ENCODE measurements at regions of chr13 and their contacts with region 1.

Region 1: DNA sequence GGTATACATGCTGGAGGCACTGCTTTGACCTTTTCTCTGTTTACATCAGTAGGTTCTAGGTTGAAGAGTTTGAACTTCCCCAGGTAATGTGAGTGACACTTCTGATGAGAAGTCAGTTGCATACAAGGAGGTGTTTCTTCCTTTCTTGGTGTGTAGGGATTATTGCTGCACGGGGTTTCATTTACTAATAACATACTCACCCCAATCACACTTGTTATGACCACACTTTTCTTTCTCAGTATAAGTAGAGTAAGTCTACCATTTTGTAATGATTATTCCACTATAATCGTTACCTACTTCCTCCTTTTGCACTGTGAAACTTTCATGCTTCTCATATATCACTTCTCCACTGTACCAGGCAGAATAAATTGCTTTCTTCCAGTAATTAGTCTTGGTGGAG is 138.0 kb downstream of the TNFSF13B start:
- DNase-seq: no peak
- ATAC-seq: no peak
- H3K4me3 ChIP-seq: no peak overlapping the region
- H3K4me3 Mint-ChIP-seq: peak overlapping the region in 2 of 10 donors; percentile 84 to 87
- H3K27ac ChIP-seq: peak overlapping the region; percentile 1
- H3K27ac Mint-ChIP-seq: peak overlapping the region in 8 of 9 donors; percentile 64 to 95 (median 82)
- H3K4me1 ChIP-seq: peaks cover 35% of the 10 kb centered on the region in 2 donors
- H3K4me1 Mint-ChIP-seq: peaks cover 13 to 70% (median 55%) of the 10 kb centered on the region in 7 donors
- H3K27me3 ChIP-seq: no peaks in the 10 kb centered on the region
- H3K27me3 Mint-ChIP-seq: peaks cover 0 to 2% (median 0%) of the 10 kb centered on the region in 5 donors

Region 2: DNA sequence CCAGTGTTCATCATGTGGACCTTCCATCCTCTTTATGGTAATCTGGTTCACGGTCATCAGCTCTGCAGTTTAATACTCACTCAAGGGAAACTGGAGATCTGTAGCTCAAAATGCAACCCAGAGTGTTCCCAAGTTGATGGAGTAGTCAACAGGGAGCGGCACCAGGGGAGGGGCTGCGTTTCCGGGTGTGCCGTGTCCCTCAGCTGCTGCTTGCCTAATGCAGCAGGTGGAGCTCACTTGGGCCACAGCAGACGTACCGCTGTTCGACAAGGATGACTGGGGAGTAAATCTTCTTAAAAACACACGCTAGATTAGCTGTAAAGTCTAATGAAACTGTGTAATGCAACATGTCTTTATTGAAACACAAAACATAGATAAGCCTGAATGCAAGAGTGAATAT is 56.9 kb before region 1 on chr13:
- CTCF ChIA-PET with region 1: no interaction called
- POLR2A ChIA-PET with region 1: no interaction called
- intact Hi-C with region 1: no loop called
- DNase-seq: no peak
- ATAC-seq: no peak
- H3K4me3 ChIP-seq: no peak overlapping the region
- H3K4me3 Mint-ChIP-seq: no peak overlapping the region
- H3K27ac ChIP-seq: no peak overlapping the region
- H3K27ac Mint-ChIP-seq: no peak overlapping the region
- H3K4me1 ChIP-seq: peaks cover 4% of the 10 kb centered on the region in 2 donors
- H3K4me1 Mint-ChIP-seq: peaks cover 0 to 27% (median 5%) of the 10 kb centered on the region in 7 donors
- H3K27me3 ChIP-seq: no peaks in the 10 kb centered on the region
- H3K27me3 Mint-ChIP-seq: peaks cover 0 to 11% (median 6%) of the 10 kb centered on the region in 5 donors

Region 3: DNA sequence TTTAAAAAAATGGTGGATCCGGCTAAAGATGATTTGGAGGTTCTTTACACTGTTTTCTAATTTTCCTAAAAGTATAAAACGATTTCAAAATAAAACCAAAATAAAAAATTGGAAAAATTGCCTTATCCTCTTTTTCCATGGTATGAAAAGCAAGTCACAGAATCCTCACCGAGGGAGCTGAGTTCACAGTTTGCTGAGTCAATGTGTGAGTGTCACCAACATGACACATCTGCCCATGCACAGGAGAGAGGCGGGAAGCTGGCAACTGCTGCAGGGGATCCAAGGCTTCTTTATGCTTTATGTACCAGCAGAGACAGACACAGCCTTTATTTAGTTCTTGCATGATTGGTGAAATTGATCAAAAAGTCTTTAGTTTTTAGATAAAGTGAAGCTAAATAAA is 19.9 kb after region 1 on chr13:
- CTCF ChIA-PET with region 1: no interaction called
- POLR2A ChIA-PET with region 1: interaction called, 3 read pairs
- intact Hi-C with region 1: loop called in 1 of 2 experiments (anchors 1 kb)
- DNase-seq: no peak
- ATAC-seq: no peak
- H3K4me3 ChIP-seq: no peak overlapping the region
- H3K4me3 Mint-ChIP-seq: no peak overlapping the region
- H3K27ac ChIP-seq: no peak overlapping the region
- H3K27ac Mint-ChIP-seq: no peak overlapping the region
- H3K4me1 ChIP-seq: no peaks in the 10 kb centered on the region
- H3K4me1 Mint-ChIP-seq: peaks cover 0 to 6% (median 0%) of the 10 kb centered on the region in 7 donors
- H3K27me3 ChIP-seq: no peaks in the 10 kb centered on the region
- H3K27me3 Mint-ChIP-seq: no peaks in the 10 kb centered on the region

Region 4: GRCh38 chr13:108463340-108463739 is 55.8 kb after region 1 on chr13:
- CTCF ChIA-PET with region 1: no interaction called
- POLR2A ChIA-PET with region 1: no interaction called
- intact Hi-C with region 1: loop called in 1 of 2 experiments (anchors 1 kb)
- DNase-seq: no peak
- ATAC-seq: no peak
- H3K4me3 ChIP-seq: no peak overlapping the region
- H3K4me3 Mint-ChIP-seq: no peak overlapping the region
- H3K27ac ChIP-seq: no peak overlapping the region
- H3K27ac Mint-ChIP-seq: no peak overlapping the region
- H3K4me1 ChIP-seq: no peaks in the 10 kb centered on the region
- H3K4me1 Mint-ChIP-seq: peaks cover 0 to 8% (median 6%) of the 10 kb centered on the region in 7 donors
- H3K27me3 ChIP-seq: no peaks in the 10 kb centered on the region
- H3K27me3 Mint-ChIP-seq: peaks cover 0 to 20% (median 4%) of the 10 kb centered on the region in 5 donors

Region 5: DNA sequence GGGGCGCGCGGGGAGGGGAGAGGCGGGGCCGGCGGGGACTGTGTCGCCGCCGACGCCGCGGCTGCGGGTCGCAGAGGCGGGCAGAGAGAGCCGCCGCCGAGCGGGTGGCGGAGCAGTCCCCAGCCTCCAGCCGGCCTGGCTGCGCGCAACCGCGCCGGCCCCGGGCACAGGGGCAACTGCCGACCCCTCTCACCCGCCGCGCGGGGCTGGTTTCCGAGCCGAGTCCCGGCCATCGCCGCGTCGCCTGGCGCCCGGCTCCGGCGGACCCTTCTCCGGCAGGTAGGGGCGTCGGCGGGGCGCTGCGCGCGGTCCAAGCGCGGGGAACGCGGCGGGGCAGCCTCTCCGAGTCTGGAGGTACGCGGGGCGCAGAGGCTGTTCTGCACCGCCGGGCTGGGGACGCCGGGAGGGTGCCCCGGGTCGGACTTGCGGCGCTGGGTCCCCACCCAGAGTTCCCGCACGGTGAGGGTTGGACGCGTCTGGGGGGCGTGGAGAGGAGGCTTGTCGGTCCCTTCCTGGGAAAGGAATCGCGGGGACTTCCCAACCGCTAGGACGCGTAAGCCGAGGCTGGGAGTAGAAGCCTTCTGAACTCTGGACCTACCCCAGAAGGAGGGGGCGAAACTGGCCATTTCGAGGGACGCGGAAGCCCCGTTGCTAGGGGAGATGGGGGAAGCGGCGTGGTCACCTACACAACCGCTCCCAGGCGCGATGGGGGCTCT is 88.3 kb after region 1 on chr13:
- CTCF ChIA-PET with region 1: no interaction called
- POLR2A ChIA-PET with region 1: no interaction called
- intact Hi-C with region 1: loop called in 1 of 2 experiments (anchors 5 kb)
- DNase-seq: peak in 1 of 9 donors; percentile 5
- ATAC-seq: peak; percentile 31
- H3K4me3 ChIP-seq: peak overlapping the region; percentile 46
- H3K4me3 Mint-ChIP-seq: peak overlapping the region in 9 of 10 donors; percentile 52 to 89 (median 82)
- H3K27ac ChIP-seq: no peak overlapping the region
- H3K27ac Mint-ChIP-seq: peak overlapping the region in 1 of 9 donors; percentile 44
- H3K4me1 ChIP-seq: no peaks in the 10 kb centered on the region
- H3K4me1 Mint-ChIP-seq: peaks cover 3 to 21% (median 16%) of the 10 kb centered on the region in 7 donors
- H3K27me3 ChIP-seq: no peaks in the 10 kb centered on the region
- H3K27me3 Mint-ChIP-seq: peaks cover 31 to 64% (median 45%) of the 10 kb centered on the region in 5 donors

Region 6: DNA sequence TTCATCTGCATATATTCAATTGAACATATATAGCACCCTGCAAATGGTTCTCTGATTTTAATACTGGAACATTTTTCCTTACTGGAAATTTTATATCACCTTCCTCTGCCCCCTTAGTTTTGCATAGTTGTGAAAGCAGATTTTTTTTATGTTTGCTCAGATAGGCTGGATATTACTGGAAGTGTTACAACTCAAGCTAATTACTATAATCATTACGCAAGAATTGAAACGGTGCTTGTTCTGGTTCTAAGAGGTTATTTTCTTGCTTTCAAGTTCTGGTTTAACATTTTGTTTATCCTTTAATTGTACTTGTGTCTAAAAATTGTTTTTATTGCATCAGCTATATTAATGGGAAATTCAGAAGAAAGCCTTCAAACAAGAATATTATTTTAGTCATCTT is 126.3 kb after region 1 on chr13:
- CTCF ChIA-PET with region 1: no interaction called
- POLR2A ChIA-PET with region 1: no interaction called
- intact Hi-C with region 1: no loop called
- DNase-seq: no peak
- ATAC-seq: no peak
- H3K4me3 ChIP-seq: no peak overlapping the region
- H3K4me3 Mint-ChIP-seq: no peak overlapping the region
- H3K27ac ChIP-seq: no peak overlapping the region
- H3K27ac Mint-ChIP-seq: no peak overlapping the region
- H3K4me1 ChIP-seq: no peaks in the 10 kb centered on the region
- H3K4me1 Mint-ChIP-seq: peaks cover 0 to 2% (median 0%) of the 10 kb centered on the region in 7 donors
- H3K27me3 ChIP-seq: peaks cover 0 to 3% of the 10 kb centered on the region in 2 donors
- H3K27me3 Mint-ChIP-seq: peaks cover 0 to 33% (median 24%) of the 10 kb centered on the region in 5 donors